ENCODE measurements at regions of chr22 and their contacts with region 1.

Region 1: DNA sequence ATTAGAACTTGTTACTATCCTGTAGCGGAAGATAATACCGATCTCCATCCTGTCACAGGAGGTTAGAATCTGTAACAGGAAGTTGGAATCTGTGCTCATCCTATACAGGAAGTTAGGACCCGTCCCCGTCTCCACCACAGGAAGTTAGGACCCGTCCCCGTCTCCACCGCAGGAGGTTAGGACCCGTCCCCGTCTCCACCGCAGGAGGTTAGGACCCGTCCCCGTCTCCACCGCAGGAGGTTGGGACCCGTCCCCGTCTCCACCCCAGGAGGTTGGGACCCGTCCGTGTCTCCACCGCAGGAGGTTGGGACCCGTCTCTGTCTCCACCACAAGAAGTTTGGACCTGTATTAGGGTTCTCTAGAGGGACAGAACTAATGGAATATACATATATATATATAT is 52.2 kb downstream of the FBLN1 start:
- DNase-seq: no peak
- H3K4me3 ChIP-seq: no peak overlapping the region
- H3K4me1 ChIP-seq: no peaks in the 10 kb centered on the region
- H3K27me3 ChIP-seq: no peaks in the 10 kb centered on the region

Region 2: DNA sequence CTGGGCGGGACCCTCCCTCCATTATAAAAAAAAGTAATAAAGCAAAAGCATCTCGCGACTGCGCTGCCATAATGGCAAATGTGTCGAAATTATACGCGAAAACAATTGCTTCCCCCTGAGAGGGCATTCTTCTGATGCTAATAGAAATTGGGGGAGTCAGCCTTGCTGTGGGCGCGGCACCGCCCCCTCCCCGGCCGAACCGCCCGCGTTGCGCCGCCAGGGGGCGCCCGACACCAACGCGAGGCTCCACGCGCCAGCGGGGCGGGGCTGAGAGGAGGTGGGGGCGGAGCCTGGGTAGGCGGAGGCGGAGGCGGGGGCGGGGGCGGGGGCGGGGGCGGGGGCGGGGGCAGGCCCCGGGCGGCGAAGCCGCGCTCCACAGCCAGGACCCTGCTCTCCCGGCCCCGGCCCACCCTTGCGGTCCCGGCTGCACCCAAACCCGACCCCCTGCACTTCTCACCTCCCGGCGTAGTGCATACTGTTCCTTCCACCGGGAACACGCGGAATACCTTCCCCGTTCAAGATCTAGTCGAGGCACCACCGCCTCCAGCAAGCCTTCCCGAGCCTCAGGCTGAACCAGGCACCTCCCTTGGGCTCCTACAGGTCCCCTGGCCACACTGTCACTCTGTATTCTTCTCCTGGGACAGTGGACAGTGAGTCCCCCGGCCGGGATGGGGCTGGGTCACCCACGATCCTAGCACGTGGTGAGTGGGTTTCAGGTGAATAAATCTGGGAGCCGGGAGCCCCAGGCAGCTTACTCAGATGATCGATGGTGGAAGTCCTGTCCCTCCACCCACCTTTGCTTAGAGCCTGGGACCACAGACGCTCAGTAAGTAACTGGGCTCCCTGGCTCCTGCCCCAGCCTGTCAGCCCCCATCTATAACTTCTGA is 285.7 kb before region 1 on chr22:
- in situ Hi-C with region 1: loop called (anchors 5 kb)
- DNase-seq: peak; percentile 58 to 88
- H3K4me3 ChIP-seq: peak overlapping the region; percentile 34
- H3K4me1 ChIP-seq: peaks cover 14% of the 10 kb centered on the region
- H3K27me3 ChIP-seq: no peaks in the 10 kb centered on the region

Measured in HAP-1 (cell line).